Activated naive CD4-positive, alpha-beta T cell treated with anti-CD3 and anti-CD28 coated beads for 36 hours (primary cell): ENCODE measurements at regions of chr12 and their contacts with region 1.

Region 1: GRCh38 chr12:46546634-46547286 is 174.2 kb upstream of the SLC38A2 start:
- DNase-seq: peak; percentile 45
- H3K4me3 Mint-ChIP-seq: no peak overlapping the region
- H3K27ac Mint-ChIP-seq: peak overlapping the region; percentile 74
- H3K4me1 Mint-ChIP-seq: peaks cover 58% of the 10 kb centered on the region
- H3K27me3 Mint-ChIP-seq: no peaks in the 10 kb centered on the region

Region 2: GRCh38 chr12:46217541-46218321 is 329.0 kb before region 1 on chr12:
- CTCF ChIA-PET with region 1: no interaction called
- intact Hi-C with region 1: loop called (anchors 2 kb)
- DNase-seq: peak; percentile 74
- H3K4me3 Mint-ChIP-seq: peak overlapping the region; percentile 33
- H3K27ac Mint-ChIP-seq: peak overlapping the region; percentile 100
- H3K4me1 Mint-ChIP-seq: peaks cover 95% of the 10 kb centered on the region
- H3K27me3 Mint-ChIP-seq: no peaks in the 10 kb centered on the region

Region 3: DNA sequence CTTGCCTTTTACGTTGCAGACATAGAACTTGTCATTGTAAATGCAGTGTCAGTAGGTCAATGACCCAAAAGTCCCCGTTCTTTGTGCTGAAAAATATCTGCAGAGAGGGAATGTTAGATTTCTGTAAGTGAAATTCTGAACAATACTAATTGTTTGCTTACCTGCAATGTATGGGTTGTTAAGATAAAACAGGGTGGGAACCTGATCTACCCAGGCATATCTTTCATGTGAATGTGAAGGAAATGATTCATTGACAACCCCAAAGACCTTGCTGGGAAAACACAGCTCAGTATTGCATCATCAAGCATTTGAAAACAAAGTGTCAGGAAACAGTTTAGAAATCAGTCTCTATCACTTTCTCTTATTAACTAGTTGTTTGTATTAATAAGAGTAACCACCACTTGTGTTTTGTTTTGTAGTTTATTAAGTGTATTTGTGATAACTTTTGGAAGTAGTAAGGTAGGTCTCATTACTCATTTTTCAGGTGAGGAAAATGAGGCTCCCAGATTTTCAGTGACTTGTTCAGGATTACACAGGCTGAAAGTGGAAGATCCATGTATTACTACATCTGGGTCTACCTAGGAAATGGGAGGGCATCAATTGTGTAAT is 116.3 kb before region 1 on chr12:
- CTCF ChIA-PET with region 1: no interaction called
- intact Hi-C with region 1: loop called (anchors 1 kb)
- DNase-seq: peak; percentile 64
- H3K4me3 Mint-ChIP-seq: peak overlapping the region; percentile 53
- H3K27ac Mint-ChIP-seq: peak overlapping the region; percentile 82
- H3K4me1 Mint-ChIP-seq: peaks cover 30% of the 10 kb centered on the region
- H3K27me3 Mint-ChIP-seq: no peaks in the 10 kb centered on the region

Region 4: GRCh38 chr12:46516933-46517578 is 29.7 kb before region 1 on chr12:
- CTCF ChIA-PET with region 1: no interaction called
- intact Hi-C with region 1: loop called (anchors 1 kb)
- DNase-seq: peak; percentile 50
- H3K4me3 Mint-ChIP-seq: peak overlapping the region; percentile 17
- H3K27ac Mint-ChIP-seq: peak overlapping the region; percentile 90
- H3K4me1 Mint-ChIP-seq: peaks cover 60% of the 10 kb centered on the region
- H3K27me3 Mint-ChIP-seq: no peaks in the 10 kb centered on the region

Region 5: DNA sequence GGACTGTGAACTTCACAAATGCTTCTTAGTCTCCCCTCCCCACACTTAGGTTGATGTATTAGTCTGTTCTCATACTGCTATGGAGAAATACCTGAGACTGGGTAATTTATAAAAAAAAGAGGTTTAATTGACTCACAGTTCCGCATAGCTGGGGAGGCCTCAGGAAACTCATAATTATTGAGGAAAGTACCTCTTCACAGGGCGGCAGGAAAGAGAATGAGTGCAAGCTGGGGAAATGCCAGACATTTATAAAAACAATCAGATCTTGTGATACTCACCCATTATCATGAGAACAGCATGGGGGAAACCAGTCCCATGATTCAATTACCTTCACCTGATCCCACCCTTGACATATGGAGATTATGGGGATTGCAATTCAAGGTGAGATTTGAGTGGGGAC is 100.3 kb after region 1 on chr12:
- CTCF ChIA-PET with region 1: no interaction called
- intact Hi-C with region 1: loop called (anchors 1 kb)
- DNase-seq: peak; percentile 53
- H3K4me3 Mint-ChIP-seq: no peak overlapping the region
- H3K27ac Mint-ChIP-seq: peak overlapping the region; percentile 74
- H3K4me1 Mint-ChIP-seq: peaks cover 9% of the 10 kb centered on the region
- H3K27me3 Mint-ChIP-seq: no peaks in the 10 kb centered on the region

Region 6: DNA sequence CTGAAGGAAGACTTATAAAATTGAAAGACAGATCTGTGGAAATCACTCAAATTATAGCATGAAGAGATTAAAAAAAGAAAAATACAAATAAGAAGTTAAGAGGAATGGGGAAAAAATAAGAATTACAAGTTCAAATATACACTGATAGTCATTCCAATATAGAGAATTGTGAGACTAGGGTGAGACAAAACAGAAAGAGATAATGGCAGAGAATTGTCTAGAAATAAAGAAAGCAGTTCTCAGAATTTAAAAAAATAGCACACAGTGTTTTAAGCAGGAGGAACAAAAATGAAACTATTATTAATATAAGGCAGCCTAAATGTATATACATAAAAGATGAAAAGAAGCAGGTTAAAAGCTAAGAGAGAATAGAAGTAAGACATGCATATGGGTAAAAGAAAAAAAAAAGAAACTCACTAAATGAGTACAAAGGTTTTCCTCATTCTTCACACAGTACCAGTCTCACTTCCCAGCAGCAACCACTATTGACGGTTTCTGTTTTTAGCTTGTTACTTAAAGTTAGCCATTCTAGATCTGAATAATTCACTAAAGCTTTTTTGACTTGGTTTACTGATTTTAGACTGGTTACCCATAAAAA is 247.9 kb after region 1 on chr12:
- CTCF ChIA-PET with region 1: no interaction called
- intact Hi-C with region 1: loop called (anchors 2 kb)
- DNase-seq: peak; percentile 46
- H3K4me3 Mint-ChIP-seq: no peak overlapping the region
- H3K27ac Mint-ChIP-seq: peak overlapping the region; percentile 80
- H3K4me1 Mint-ChIP-seq: peaks cover 27% of the 10 kb centered on the region
- H3K27me3 Mint-ChIP-seq: no peaks in the 10 kb centered on the region

Region 7: DNA sequence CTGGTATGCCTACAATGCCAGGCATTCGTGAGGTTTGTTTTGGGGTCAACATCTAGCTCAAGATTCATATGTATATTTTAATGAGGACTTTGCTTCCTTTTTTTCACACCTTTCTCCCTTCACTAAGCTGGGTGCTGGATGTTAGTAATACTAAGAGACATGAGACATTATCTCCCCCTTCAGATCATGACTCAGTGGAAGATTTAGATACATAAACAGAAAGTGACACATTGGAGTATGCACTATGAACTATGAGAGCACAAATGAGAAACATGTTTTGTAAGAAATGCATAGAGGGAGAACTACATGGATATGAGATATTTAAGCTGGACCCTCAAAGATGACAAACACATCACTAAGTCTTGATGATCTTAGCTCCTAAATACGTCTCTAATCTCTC is 872.7 kb after region 1 on chr12:
- CTCF ChIA-PET with region 1: no interaction called
- intact Hi-C with region 1: loop called (anchors 10 kb)
- DNase-seq: no peak
- H3K4me3 Mint-ChIP-seq: no peak overlapping the region
- H3K27ac Mint-ChIP-seq: peak overlapping the region; percentile 83
- H3K4me1 Mint-ChIP-seq: peaks cover 51% of the 10 kb centered on the region
- H3K27me3 Mint-ChIP-seq: no peaks in the 10 kb centered on the region